Heart left ventricle (tissue), 16 donors: ENCODE measurements at regions of chr7 and their contacts with region 1.

Region 1: GRCh38 chr7:121366852-121367431 is 29.2 kb downstream of the FAM3C start:
- DNase-seq: no peak
- ATAC-seq: no peak
- H3K4me3 ChIP-seq: no peak overlapping the region
- H3K27ac ChIP-seq: no peak overlapping the region
- H3K4me1 ChIP-seq: peaks cover 0 to 13% (median 5%) of the 10 kb centered on the region in 12 donors
- H3K27me3 ChIP-seq: no peaks in the 10 kb centered on the region
- CTCF ChIP-seq: peak; percentile 62 to 90 (median 82)
- POLR2A ChIP-seq: no peak

Region 2: GRCh38 chr7:121395961-121396757 is 29.2 kb after region 1 on chr7 and contains the start of gene FAM3C:
- intact Hi-C with region 1: loop called in 1 of 10 experiments (anchors 2 kb)
- DNase-seq: peak; percentile 94 to 96 (median 95)
- ATAC-seq: peak; percentile 98 to 99 (median 99)
- H3K4me3 ChIP-seq: peak within 1 kb of the TSS; percentile 66 to 95 (median 86)
- H3K27ac ChIP-seq: peak within 1 kb of the TSS; percentile 63 to 92 (median 86)
- H3K4me1 ChIP-seq: peaks cover 0 to 26% (median 10%) of the 10 kb centered on the region in 12 donors
- H3K27me3 ChIP-seq: no peaks in the 10 kb centered on the region
- CTCF ChIP-seq: peak; percentile 92 to 100 (median 98)
- POLR2A ChIP-seq: peak in 1 of 2 donors; percentile 90
- total RNA-seq, gene FAM3C: 35.7 to 52.1 (median 45.3) TPM

Region 3: GRCh38 chr7:121437456-121438127 is 70.7 kb after region 1 on chr7:
- intact Hi-C with region 1: loop called in 1 of 10 experiments (anchors 2 kb)
- DNase-seq: no peak
- ATAC-seq: no peak
- H3K4me3 ChIP-seq: peak overlapping the region in 5 of 12 donors; percentile 3 to 40 (median 35)
- H3K27ac ChIP-seq: peak overlapping the region in 7 of 12 donors; percentile 17 to 70 (median 57)
- H3K4me1 ChIP-seq: peaks cover 0 to 20% (median 10%) of the 10 kb centered on the region in 12 donors
- H3K27me3 ChIP-seq: no peaks in the 10 kb centered on the region
- CTCF ChIP-seq: no peak
- POLR2A ChIP-seq: no peak

Region 4: GRCh38 chr7:121547544-121548092 is 180.7 kb after region 1 on chr7:
- intact Hi-C with region 1: loop called (anchors 1 to 5 kb)
- DNase-seq: no peak
- ATAC-seq: peak in 3 of 4 donors; percentile 50 to 78 (median 63)
- H3K4me3 ChIP-seq: no peak overlapping the region
- H3K27ac ChIP-seq: no peak overlapping the region
- H3K4me1 ChIP-seq: peaks cover 0 to 4% (median 0%) of the 10 kb centered on the region in 12 donors
- H3K27me3 ChIP-seq: no peaks in the 10 kb centered on the region
- CTCF ChIP-seq: peak; percentile 60 to 87 (median 80)
- POLR2A ChIP-seq: no peak

Region 5: DNA sequence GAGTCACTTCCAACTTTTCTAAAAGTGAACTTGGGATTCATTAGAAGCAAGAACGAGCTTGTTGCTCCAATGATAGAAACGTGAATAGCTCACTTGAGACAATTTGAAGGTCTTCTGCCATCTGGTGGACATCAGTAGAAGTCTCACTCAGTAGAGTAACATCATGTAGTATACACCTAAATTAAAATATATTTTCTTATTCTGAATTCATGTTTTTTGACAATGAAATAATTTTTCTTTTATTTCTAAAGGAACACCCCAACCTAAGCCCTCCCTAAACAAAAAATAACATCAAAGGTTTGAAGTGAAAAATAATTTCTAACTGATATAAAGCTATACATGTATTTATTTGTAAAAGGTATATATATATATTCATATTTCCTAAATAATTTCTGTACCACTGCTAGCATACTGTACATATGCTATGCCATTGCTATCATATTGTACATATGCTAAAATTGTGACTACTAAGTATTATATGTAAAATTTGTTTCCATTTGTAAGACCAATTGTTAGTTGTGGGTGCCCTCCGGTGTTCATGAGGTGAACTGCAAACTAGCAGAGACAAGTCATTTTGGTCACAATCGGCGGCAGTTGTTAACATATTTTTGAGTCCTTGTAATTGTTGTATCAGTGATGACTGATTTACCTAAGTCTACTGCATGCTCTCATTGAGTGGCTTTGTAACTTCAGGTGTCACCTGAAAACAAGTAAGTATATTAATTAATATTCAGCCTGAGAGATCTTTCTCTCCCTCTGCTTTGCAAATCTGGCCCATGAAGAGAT is 627.9 kb after region 1 on chr7:
- intact Hi-C with region 1: loop called in 7 of 10 experiments (anchors 5 to 10 kb)
- DNase-seq: peak in 3 of 5 donors; percentile 10 to 37 (median 24)
- ATAC-seq: peak in 3 of 4 donors; percentile 56 to 81 (median 60)
- H3K4me3 ChIP-seq: no peak overlapping the region
- H3K27ac ChIP-seq: no peak overlapping the region
- H3K4me1 ChIP-seq: no peaks in the 10 kb centered on the region
- H3K27me3 ChIP-seq: no peaks in the 10 kb centered on the region
- CTCF ChIP-seq: peak; percentile 37 to 63 (median 51)
- POLR2A ChIP-seq: no peak